Psoas muscle (tissue), 8 donors: ENCODE measurements at regions of chr17 and their contacts with region 1.

Region 1: GRCh38 chr17:65055348-65056261 is 935 bp downstream of the GNA13 start:
- DNase-seq: peak; percentile 72 to 87
- ATAC-seq: peak; percentile 45 to 67 (median 53)
- H3K4me3 ChIP-seq: peak overlapping the region; percentile 92
- H3K27ac ChIP-seq: peak overlapping the region; percentile 99
- H3K4me1 ChIP-seq: peaks cover 34% of the 10 kb centered on the region
- H3K27me3 ChIP-seq: no peaks in the 10 kb centered on the region
- CTCF ChIP-seq: no peak

Region 2: DNA sequence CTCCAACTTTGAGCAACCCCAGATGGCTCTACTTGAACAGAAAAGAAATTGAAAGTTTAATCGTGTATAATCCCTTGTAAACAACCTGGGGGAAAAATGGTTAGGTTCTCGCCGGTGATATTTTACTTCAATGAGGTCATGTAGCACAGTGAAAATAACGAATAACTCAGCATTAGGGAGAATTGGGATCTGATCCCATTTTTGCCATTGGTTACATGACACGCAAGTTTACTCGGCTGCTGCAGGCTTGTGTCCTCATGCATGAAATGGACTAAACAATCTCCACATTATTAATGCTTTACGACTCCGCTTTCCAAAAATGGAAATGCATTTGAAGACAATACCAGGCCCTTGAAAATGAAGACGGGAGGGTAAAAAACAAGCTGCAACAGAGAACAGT is 90.8 kb before region 1 on chr17:
- intact Hi-C with region 1: loop called in 1 of 2 experiments (anchors 5 kb)
- DNase-seq: no peak
- ATAC-seq: no peak
- H3K4me3 ChIP-seq: peak overlapping the region; percentile 50
- H3K27ac ChIP-seq: peak overlapping the region; percentile 83
- H3K4me1 ChIP-seq: peaks cover 15% of the 10 kb centered on the region
- H3K27me3 ChIP-seq: no peaks in the 10 kb centered on the region
- CTCF ChIP-seq: no peak

Region 3: GRCh38 chr17:64975329-64976087 is 80.1 kb before region 1 on chr17:
- intact Hi-C with region 1: loop called (anchors 5 kb)
- DNase-seq: peak; percentile 96 to 98
- ATAC-seq: peak; percentile 95 to 97 (median 96)
- H3K4me3 ChIP-seq: peak overlapping the region; percentile 81
- H3K27ac ChIP-seq: peak overlapping the region; percentile 99
- H3K4me1 ChIP-seq: peaks cover 4% of the 10 kb centered on the region
- H3K27me3 ChIP-seq: no peaks in the 10 kb centered on the region
- CTCF ChIP-seq: no peak

Region 4: DNA sequence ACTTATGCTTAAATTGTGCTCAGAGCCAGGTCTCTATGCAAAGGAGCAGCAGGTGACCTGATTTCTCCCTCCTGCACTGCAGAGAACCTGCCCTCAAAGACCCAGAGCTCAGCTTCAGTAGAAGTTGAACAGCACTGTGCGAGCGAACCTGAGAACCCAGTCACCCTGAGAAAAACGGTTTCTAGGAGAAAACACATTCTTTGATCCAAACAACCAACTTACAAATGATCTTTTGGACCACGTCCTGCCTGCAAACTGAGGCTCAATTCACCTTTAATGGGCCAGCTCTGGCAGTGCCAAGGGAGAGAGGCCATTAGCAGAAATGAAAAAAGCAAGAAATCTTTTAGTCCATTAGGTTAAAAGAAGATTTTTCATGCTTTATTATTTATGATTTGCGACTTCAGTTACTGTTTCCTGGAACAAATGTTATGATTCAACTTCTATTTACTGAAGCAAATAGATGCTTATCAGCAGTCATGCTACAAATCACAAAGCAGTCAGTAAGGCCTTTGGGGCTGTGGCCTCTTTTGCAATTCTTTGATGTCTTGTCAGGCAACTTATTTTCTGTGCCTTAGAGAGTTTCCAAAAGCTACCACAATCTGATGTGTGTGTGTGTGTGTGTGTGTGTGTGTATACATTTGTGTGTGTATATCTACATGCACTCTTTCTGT is 70.6 kb before region 1 on chr17:
- intact Hi-C with region 1: loop called in 1 of 2 experiments (anchors 2 kb)
- DNase-seq: no peak
- ATAC-seq: no peak
- H3K4me3 ChIP-seq: no peak overlapping the region
- H3K27ac ChIP-seq: peak overlapping the region; percentile 65
- H3K4me1 ChIP-seq: peaks cover 22% of the 10 kb centered on the region
- H3K27me3 ChIP-seq: no peaks in the 10 kb centered on the region
- CTCF ChIP-seq: no peak

Region 5: GRCh38 chr17:65017207-65017774 is 38.3 kb before region 1 on chr17:
- intact Hi-C with region 1: loop called in 1 of 2 experiments (anchors 5 kb)
- DNase-seq: no peak
- ATAC-seq: peak in 2 of 4 donors; percentile 15 to 26
- H3K4me3 ChIP-seq: no peak overlapping the region
- H3K27ac ChIP-seq: peak overlapping the region; percentile 37
- H3K4me1 ChIP-seq: peaks cover 67% of the 10 kb centered on the region
- H3K27me3 ChIP-seq: no peaks in the 10 kb centered on the region
- CTCF ChIP-seq: no peak

Region 6: GRCh38 chr17:65027305-65027704 is 28.3 kb before region 1 on chr17:
- intact Hi-C with region 1: no loop called
- DNase-seq: no peak
- ATAC-seq: no peak
- H3K4me3 ChIP-seq: no peak overlapping the region
- H3K27ac ChIP-seq: no peak overlapping the region
- H3K4me1 ChIP-seq: peaks cover 46% of the 10 kb centered on the region
- H3K27me3 ChIP-seq: no peaks in the 10 kb centered on the region
- CTCF ChIP-seq: no peak

Region 7: GRCh38 chr17:65100316-65101140 is 44.9 kb after region 1 on chr17:
- intact Hi-C with region 1: loop called (anchors 2 to 5 kb)
- DNase-seq: peak; percentile 87 to 94
- ATAC-seq: peak; percentile 93 to 95 (median 94)
- H3K4me3 ChIP-seq: peak overlapping the region; percentile 74
- H3K27ac ChIP-seq: peak overlapping the region; percentile 76
- H3K4me1 ChIP-seq: peaks cover 17% of the 10 kb centered on the region
- H3K27me3 ChIP-seq: no peaks in the 10 kb centered on the region
- CTCF ChIP-seq: peak; percentile 78

Region 8: GRCh38 chr17:65191811-65192740 is 136.5 kb after region 1 on chr17:
- intact Hi-C with region 1: no loop called
- DNase-seq: no peak
- ATAC-seq: no peak
- H3K4me3 ChIP-seq: no peak overlapping the region
- H3K27ac ChIP-seq: no peak overlapping the region
- H3K4me1 ChIP-seq: no peaks in the 10 kb centered on the region
- H3K27me3 ChIP-seq: peaks cover 0 to 2% (median 0%) of the 10 kb centered on the region in 3 donors
- CTCF ChIP-seq: no peak